Activated CD4-positive, alpha-beta memory T cell treated with anti-CD3 and anti-CD28 coated beads, Interleukin-2, amount 10 ng/mL, durations not matched to agents 7 days and 5 days (primary cell): ENCODE measurements at regions of chr14 and their contacts with region 1.

Region 1: DNA sequence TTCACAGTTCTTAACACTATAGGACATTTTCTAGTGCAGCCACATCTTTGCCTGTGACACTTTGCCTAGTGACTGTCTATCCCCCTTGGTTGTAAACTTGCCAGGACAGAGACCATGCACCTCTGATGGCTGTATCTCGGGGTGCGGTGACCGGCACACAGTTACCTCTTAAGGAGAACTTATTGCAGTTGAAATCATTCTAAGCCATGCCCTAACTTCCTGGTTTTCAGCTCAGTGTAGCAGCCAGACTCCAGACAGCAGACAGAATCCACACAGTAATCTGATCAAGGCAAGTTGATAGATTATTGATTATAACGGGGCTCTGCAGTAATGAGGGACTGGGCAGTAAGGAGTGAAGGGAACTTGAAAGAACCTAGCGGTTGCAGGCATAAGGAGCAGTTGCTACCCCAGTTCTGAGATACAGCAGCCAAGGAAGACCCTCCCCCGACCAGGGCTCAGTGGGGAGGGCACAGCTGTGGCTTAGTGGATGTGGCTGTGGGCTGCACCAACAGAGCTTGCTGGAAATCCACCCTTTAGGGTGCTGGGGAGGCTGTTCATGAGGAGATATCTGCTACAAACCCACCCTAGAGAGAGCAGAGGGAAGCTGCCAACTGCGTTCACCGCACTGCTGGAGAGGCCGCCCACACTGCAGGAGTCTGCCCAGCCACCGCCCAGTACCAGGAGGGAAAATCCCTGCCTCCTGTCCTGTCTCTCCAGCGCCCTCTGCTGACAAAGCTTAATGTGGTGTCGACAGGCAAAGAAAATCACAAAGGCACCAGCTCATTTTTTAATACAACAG is 58.2 kb upstream of the BEGAIN start:
- DNase-seq: peak; percentile 89
- H3K4me3 Mint-ChIP-seq: peak overlapping the region; percentile 13
- H3K27ac Mint-ChIP-seq: peak overlapping the region; percentile 72
- H3K4me1 Mint-ChIP-seq: peaks cover 56% of the 10 kb centered on the region
- H3K27me3 Mint-ChIP-seq: peaks cover 2% of the 10 kb centered on the region

Region 2: DNA sequence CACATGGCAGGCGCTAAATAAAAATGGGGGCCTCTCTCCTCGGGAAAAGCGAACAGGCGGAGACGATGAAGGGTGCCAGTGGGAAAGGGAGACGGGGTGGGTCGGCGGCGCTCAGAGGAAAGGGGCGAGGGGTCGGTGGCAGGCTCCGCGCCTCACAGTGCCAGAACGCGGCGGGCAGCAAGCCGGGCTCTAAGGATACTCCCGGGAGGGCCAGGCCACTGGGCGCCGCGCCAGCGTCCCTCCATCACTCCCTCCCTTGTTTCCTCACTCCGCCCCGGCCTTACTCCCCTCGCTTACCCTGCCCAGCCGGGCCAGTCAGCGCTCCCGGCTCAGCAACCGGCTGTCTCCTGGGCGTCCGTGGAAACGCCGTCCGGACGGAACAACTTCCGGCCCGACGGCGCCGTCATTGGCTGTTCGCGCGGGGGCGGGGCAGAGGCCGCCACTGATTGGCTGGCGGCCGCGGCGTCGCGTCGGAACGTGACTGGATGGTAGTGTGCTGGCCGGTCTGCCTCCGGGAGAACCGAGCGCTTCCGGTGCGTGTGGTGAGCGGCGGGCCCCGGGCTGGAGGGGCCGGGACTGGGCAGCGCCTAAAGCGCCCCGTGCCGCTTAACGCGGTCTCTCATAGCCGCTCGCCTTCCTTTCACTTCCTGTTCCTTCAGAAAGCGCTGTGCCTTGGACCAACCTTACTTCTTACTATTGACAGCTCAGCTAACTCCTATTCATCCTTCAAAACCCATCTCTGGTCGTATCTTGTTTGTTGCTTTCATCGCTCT is 269.2 kb before region 1 on chr14:
- CTCF ChIA-PET with region 1: interaction called, 228 read pairs
- POLR2A ChIA-PET with region 1: interaction called, 9 read pairs
- DNase-seq: peak; percentile 95
- H3K4me3 Mint-ChIP-seq: peak within 1 kb of the TSS; percentile 96
- H3K27ac Mint-ChIP-seq: peak within 1 kb of the TSS; percentile 99
- H3K4me1 Mint-ChIP-seq: peaks cover 49% of the 10 kb centered on the region
- H3K27me3 Mint-ChIP-seq: no peaks in the 10 kb centered on the region

Region 3: DNA sequence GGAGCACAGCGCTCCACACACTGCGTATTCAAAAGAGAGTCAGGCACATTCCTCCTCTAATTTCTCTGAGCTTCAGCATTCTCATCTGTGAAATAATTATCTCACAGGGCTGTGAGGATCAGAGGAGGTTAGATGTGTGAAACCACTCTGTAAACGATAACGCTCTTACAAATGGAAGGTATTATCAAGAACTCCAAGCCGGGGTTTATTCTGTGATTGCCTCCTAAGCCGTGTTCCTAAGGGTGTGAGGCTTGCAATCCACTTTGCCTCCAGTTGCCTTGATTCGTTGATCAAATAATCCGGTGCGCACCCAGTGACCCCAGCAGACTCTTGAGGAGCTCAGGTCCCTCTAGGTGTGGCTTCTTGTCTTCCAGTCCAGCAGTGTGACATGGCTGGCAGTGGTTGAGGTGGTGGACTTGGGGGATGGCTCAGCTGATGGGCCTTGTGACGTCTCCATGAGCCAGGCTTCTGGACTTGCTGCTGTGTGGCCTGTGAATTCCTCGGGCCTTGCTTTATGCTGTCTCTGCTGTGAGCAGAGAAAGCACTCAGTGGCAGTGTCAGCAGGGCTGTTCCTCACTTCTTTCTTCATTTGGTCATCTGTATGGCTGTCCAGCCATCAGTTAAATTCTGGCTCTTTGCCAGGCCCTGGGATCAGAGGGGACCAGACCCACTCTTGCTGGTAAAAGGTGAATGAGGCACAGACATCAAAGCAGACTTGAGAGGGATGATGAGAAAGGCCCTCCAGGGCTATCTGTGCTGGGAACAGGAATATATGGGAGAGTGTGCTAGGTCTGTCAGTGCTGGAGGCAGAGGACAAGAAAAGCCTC is 251.3 kb before region 1 on chr14:
- CTCF ChIA-PET with region 1: interaction called, 228 read pairs
- POLR2A ChIA-PET with region 1: no interaction called
- DNase-seq: no peak
- H3K4me3 Mint-ChIP-seq: no peak overlapping the region
- H3K27ac Mint-ChIP-seq: no peak overlapping the region
- H3K4me1 Mint-ChIP-seq: no peaks in the 10 kb centered on the region
- H3K27me3 Mint-ChIP-seq: no peaks in the 10 kb centered on the region

Region 4: GRCh38 chr14:100440187-100440631 is 205.2 kb before region 1 on chr14:
- CTCF ChIA-PET with region 1: interaction called, 42 read pairs
- POLR2A ChIA-PET with region 1: no interaction called
- DNase-seq: peak; percentile 38
- H3K4me3 Mint-ChIP-seq: no peak overlapping the region
- H3K27ac Mint-ChIP-seq: no peak overlapping the region
- H3K4me1 Mint-ChIP-seq: peaks cover 26% of the 10 kb centered on the region
- H3K27me3 Mint-ChIP-seq: no peaks in the 10 kb centered on the region

Region 5: GRCh38 chr14:100540141-100540925 is 105.1 kb before region 1 on chr14:
- CTCF ChIA-PET with region 1: interaction called, 17 read pairs
- POLR2A ChIA-PET with region 1: interaction called, 14 read pairs
- DNase-seq: no peak
- H3K4me3 Mint-ChIP-seq: no peak overlapping the region
- H3K27ac Mint-ChIP-seq: no peak overlapping the region
- H3K4me1 Mint-ChIP-seq: peaks cover 3% of the 10 kb centered on the region
- H3K27me3 Mint-ChIP-seq: no peaks in the 10 kb centered on the region

Region 6: DNA sequence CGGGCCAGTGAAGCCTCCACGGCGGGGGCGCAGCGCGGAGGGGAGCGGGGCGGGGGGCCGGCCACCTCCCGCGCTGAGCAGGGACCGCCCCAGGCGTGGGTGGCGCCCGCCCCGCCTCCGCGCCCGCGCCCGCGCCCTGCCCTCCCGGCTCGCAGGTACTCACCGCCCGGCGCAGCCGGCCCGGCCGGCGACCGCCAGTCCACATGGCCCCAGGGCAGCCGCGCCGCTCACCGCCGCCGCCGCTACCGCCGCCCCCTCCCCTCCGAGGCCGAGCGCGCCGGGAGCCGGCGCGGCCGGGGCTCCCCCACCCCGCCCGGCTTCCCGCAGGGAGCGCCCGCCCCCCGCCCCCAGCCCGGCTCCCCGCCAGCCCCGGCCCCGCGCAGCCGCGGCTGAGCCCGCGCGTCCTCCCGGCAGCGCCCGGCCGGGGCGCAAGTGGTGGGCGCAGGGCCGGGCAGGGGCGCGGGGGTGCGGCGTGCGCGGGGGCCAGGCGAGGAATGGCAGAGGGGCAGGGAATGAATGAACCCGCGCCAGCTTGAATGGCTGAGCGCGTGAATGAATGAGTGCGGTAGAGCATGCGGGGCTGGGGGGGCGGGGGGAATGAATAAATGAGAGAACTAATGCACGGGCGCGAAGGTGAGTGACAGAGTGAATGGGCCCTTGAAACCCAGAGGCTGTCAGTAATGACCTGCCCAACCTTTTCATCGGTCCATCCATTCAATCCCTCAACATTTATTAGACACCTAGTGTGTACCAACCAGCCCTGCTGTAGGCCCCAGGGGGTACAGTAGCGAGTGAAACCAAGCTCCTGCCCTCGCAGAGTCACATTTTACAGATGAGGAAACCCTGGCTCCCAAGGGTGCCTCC is 58.1 kb before region 1 on chr14 and contains the start of gene BEGAIN:
- CTCF ChIA-PET with region 1: no interaction called
- POLR2A ChIA-PET with region 1: no interaction called
- DNase-seq: peak; percentile 47
- H3K4me3 Mint-ChIP-seq: peak within 1 kb of the TSS; percentile 60
- H3K27ac Mint-ChIP-seq: no peak within 1 kb of the TSS
- H3K4me1 Mint-ChIP-seq: peaks cover 8% of the 10 kb centered on the region
- H3K27me3 Mint-ChIP-seq: peaks cover 19% of the 10 kb centered on the region
- total RNA-seq, gene BEGAIN: 2.7 to 3.1 TPM

Region 7: DNA sequence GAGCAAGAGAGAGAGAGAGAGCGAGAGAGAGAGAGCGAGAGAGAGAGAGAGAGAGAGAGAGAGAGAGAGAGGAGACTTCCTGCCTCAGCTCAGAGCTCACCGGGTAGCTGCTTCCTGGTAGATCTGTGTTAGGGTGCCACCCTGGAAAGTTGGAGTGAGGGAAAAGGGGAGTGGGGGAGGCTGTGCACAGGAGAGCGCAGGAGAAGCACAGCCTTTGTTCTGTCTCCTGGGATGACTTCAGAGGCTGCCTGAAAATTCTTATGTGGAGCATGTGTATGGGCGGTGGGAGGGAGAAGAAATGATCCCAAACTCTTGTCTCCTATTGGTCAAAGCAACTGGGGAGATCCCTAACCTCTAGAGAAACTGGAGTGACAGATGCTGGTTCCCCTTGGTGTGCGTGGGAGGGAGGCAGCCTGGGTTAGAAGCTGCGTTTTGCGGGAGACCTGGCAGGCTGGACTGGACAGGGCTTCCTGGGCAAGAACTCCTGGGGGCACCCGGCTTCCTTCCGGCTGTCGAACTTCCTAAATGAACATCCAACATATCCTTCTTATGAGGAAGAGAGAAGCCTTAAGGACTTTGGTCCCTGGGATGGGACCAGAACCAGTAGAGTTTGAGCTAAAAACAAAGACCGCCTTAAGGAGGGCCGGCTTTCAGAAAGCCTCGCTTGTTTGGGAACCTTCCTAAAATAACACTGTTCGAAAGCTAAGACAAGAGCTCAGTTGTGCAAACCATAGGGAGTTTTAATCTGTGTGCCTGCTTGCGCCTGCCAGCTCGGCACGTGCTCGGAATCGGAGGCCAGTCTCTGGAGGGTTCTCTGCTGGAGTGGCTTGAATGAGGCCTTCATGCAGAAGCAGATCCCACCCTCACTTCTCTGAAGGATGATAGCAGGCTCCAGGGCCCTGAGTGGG is 27.7 kb before region 1 on chr14:
- CTCF ChIA-PET with region 1: interaction called, 21 read pairs
- POLR2A ChIA-PET with region 1: interaction called, 5 read pairs
- DNase-seq: no peak
- H3K4me3 Mint-ChIP-seq: peak overlapping the region; percentile 2
- H3K27ac Mint-ChIP-seq: no peak overlapping the region
- H3K4me1 Mint-ChIP-seq: peaks cover 14% of the 10 kb centered on the region
- H3K27me3 Mint-ChIP-seq: peaks cover 8% of the 10 kb centered on the region

Region 8: GRCh38 chr14:100726550-100727085 is 81.2 kb after region 1 on chr14 and contains the start of gene DLK1:
- CTCF ChIA-PET with region 1: no interaction called
- POLR2A ChIA-PET with region 1: no interaction called
- DNase-seq: no peak
- H3K4me3 Mint-ChIP-seq: no peak within 1 kb of the TSS
- H3K27ac Mint-ChIP-seq: no peak within 1 kb of the TSS
- H3K4me1 Mint-ChIP-seq: no peaks in the 10 kb centered on the region
- H3K27me3 Mint-ChIP-seq: peaks cover 35% of the 10 kb centered on the region
- total RNA-seq, gene DLK1: not detected

Region 9: DNA sequence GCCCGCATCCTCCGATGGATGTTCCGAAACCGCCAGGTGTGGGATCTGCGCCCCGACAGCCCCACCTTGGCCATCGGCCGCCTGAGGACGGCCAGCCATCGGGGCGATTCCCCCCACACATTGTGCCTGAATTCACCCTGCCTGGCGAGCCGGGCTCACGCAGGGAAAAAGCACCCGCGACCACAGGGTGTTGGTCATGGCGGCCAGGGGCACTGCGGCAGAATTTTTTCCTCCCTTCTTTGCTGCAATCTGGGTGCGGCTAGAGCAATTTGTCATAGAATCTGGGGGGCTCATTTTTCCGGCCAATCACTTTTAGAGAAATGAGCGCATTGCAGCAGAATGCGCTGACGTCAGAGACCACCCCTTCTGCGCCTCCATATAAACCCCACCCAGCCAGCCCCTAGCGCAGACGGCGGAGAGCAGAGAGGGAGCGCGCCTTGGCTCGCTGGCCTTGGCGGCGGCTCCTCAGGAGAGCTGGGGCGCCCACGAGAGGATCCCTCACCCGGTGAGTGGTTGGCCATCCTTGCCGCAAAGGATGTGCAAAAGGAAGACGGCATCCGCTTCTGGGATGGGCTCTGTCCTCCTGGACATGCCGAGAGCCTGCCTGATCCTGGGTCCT is 180.4 kb after region 1 on chr14 and contains the start of gene MEG3:
- CTCF ChIA-PET with region 1: no interaction called
- POLR2A ChIA-PET with region 1: no interaction called
- DNase-seq: no peak
- H3K4me3 Mint-ChIP-seq: no peak within 1 kb of the TSS
- H3K27ac Mint-ChIP-seq: no peak within 1 kb of the TSS
- H3K4me1 Mint-ChIP-seq: no peaks in the 10 kb centered on the region
- H3K27me3 Mint-ChIP-seq: peaks cover 35% of the 10 kb centered on the region
- total RNA-seq, gene MEG3: not detected

Region 10: GRCh38 chr14:101022121-101022520 is 376.7 kb after region 1 on chr14:
- CTCF ChIA-PET with region 1: no interaction called
- POLR2A ChIA-PET with region 1: no interaction called
- DNase-seq: peak; percentile 3
- H3K4me3 Mint-ChIP-seq: no peak overlapping the region
- H3K27ac Mint-ChIP-seq: no peak overlapping the region
- H3K4me1 Mint-ChIP-seq: no peaks in the 10 kb centered on the region
- H3K27me3 Mint-ChIP-seq: no peaks in the 10 kb centered on the region